Heart left ventricle (tissue), 16 donors: ENCODE measurements at regions of chr22 and their contacts with region 1.

Region 1: DNA sequence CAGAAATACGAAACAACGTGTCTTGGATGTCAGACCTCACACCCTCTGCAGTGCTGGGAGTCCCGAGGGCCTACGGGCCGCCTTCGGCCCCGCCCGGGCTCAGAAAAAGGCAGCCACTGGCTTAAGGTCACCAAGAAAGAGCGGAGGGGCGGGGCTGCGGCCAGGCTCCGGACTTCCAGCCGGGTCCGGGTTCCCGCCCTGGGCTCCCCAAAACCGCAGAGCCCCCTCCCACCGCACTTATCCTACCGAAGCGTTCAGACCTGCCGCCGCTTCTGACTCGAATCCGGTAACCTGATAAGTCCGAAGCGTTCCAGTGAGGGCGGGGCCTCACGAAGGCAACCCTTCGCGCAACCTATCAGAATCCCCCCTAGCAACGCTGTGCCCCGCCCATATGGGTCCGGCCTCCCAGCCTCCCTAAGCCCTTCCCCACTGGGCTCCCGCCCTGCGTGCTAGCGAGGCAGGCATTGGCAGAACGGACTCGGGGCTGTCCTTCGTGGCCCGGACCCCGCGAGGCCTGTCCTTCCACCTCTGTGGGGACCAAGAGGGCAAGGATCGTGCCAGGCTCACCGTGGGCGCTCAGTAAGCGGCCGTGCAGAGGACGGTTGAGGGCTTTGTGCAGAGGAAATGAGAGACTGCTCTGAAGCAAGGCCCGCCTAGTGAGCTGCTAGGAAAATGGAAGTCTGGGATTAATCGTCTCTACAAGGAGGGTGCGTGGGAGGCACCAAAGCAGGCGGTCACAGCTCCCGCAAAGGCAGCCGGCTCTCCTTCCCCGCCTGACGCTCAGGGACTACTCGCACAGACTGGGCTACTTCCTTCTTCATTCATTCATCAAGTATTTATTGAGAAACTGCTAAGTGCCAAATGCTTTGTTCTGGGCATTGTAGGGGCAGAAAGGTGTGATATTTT is at the start of gene NAGA:
- DNase-seq: peak; percentile 95 to 99 (median 98)
- ATAC-seq: peak; percentile 95 to 98 (median 96)
- H3K4me3 ChIP-seq: peak within 1 kb of the TSS; percentile 37 to 98 (median 68)
- H3K27ac ChIP-seq: peak within 1 kb of the TSS; percentile 67 to 94 (median 86)
- H3K4me1 ChIP-seq: peaks cover 3 to 58% (median 34%) of the 10 kb centered on the region in 12 donors
- H3K27me3 ChIP-seq: no peaks in the 10 kb centered on the region
- CTCF ChIP-seq: no peak
- POLR2A ChIP-seq: peak in 1 of 2 donors; percentile 90
- total RNA-seq, gene NAGA: 10.6 to 48.3 (median 13.8) TPM

Region 2: GRCh38 chr22:42001121-42001520 is 69.6 kb before region 1 on chr22:
- intact Hi-C with region 1: loop called in 1 of 10 experiments (anchors 10 kb)
- DNase-seq: no peak
- ATAC-seq: no peak
- H3K4me3 ChIP-seq: no peak overlapping the region
- H3K27ac ChIP-seq: no peak overlapping the region
- H3K4me1 ChIP-seq: peaks cover 0 to 15% (median 2%) of the 10 kb centered on the region in 12 donors
- H3K27me3 ChIP-seq: peaks cover 0 to 10% (median 0%) of the 10 kb centered on the region in 9 donors
- CTCF ChIP-seq: no peak
- POLR2A ChIP-seq: no peak

Region 3: DNA sequence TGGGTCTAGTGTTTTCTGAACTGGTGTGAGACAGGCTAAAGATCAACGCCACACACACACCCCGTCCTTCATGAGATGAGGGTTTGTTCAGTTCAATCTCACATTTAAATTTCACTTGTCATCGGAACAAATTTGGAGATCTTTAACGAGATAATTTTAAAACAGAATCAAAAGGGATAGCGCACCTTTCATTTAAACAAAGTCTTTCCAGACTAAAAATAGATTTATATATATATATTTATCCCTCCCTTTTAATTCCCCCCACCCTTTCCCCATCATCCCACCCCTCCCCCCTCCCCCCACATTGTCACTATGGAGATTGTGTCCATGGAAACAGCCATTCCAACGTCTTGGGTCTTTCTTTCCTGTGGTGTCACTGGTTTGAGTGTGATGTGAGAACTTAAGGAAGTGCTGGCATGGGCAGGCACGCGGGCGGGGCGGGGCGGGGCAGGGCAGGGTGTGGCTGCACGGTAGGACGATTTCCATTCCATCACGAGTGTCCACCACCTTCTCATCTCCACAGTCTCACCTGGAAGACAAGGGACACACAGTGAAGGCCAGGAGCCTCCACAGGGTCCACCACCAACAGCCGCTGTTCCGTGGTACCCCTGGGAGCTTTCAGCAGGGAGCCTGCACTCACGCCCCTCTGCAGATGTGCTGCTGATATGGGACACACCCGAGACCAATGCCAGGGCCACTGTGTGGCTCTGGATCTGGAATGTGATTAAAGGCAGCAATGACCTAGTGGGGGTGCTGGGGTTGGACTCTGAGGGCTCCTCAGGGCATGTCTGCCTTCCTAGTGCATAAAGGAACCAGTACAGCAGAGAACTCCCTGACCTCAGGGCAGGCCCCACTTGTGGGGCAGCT is 90.3 kb after region 1 on chr22:
- intact Hi-C with region 1: no loop called
- DNase-seq: no peak
- ATAC-seq: no peak
- H3K4me3 ChIP-seq: no peak overlapping the region
- H3K27ac ChIP-seq: no peak overlapping the region
- H3K4me1 ChIP-seq: peaks cover 0 to 8% (median 0%) of the 10 kb centered on the region in 12 donors
- H3K27me3 ChIP-seq: no peaks in the 10 kb centered on the region
- CTCF ChIP-seq: no peak
- POLR2A ChIP-seq: no peak